AG04449 (cell line): ENCODE measurements at regions of chr11 and their contacts with region 1.

Region 1: DNA sequence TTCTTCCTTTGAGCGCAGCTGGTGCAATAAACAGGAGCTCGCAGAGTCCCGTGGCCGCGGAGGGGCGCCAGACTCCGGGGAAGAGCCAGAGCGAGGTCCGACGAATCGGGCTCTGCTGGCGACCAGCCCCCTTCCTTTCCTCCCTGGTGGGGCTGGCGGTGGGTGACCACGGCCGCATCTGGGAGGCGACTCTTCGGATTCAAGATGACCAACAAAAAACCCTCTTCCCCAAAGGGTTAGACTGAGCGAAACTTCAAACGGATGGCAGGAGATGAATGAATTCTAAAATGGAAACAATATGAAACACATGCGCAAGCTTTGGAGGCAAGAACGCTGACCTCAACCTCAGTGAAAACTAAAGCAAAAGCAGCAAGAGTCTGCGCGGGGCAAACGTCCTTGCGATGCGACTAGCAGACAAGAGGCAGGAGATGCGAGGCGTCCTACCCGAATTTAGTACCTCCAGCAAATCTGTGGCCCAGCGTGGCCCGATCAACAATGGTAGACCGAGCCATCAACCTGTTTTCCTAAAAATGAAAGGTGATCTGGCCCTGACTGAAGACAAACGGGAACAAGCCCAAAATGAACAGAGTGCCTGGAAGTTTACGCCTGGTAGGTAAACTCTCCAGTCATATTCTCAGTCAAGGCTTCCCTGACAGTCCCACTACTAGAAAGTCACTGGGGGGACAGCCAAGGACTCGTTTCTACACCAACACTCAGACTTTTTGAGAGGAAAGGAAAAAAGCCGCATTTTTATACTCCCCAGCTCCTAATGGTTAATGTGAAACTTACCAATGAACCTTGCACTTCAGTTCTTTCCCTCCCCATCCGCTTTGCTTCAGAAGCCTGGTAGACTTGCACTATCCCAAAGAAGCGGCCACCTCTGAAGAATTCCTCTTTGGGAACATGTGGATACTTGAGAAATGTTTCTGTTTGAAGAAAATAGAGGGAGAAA is 11.6 kb downstream of the MMP3 start:
- DNase-seq: no peak
- H3K4me3 ChIP-seq: peak overlapping the region; percentile 52
- CTCF ChIP-seq: peak; percentile 83

Region 2: DNA sequence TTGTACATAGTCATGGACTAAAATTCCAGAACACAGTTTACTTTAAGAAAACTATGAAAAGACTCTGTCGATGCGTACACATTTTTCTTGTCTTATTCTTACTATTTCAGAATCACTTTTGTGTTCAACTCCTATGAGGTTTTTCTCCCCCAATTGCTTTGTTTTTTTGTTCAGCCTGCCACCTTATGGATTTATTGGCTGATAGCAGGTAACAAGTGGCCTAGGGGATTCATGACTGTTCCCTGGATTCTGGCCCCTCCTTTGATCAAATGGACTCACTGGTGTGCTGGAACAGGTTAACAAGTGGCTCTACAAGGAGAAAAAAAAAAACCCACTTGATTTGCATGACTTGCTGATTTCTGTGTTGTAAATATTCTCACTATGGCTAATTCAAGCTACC is 217.3 kb before region 1 on chr11:
- CTCF ChIA-PET with region 1: no interaction called
- POLR2A ChIA-PET with region 1: no interaction called
- DNase-seq: no peak
- H3K4me3 ChIP-seq: no peak overlapping the region
- CTCF ChIP-seq: no peak

Region 3: GRCh38 chr11:102810945-102811660 is 20.7 kb before region 1 on chr11:
- CTCF ChIA-PET with region 1: interaction called, 20 read pairs
- POLR2A ChIA-PET with region 1: no interaction called
- DNase-seq: no peak
- H3K4me3 ChIP-seq: no peak overlapping the region
- CTCF ChIP-seq: peak; percentile 35

Region 4: GRCh38 chr11:102819491-102819890 is 12.3 kb before region 1 on chr11:
- CTCF ChIA-PET with region 1: interaction called, 14 read pairs
- POLR2A ChIA-PET with region 1: no interaction called
- DNase-seq: no peak
- H3K4me3 ChIP-seq: no peak overlapping the region
- CTCF ChIP-seq: no peak

Region 5: DNA sequence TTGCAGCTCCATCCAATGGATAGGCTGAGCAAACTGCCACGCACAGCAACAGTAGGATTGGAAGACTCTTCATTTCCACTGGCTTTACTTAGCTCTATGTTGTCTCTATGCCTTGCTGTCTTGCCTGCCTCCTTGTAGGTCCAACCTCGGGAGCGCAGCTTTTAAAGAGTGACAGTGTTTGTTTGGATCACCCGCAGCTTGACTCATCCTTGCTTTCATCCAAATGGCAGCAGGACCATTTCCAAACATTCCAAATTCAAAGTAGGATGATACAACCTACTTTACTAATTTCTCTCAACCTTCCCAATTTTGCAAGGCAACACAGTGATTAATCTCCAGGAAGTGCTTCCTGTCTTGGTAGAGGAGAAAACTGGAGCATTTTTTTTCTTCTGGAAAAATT is 11.7 kb after region 1 on chr11 and contains the start of gene MMP3:
- CTCF ChIA-PET with region 1: interaction called, 18 read pairs
- POLR2A ChIA-PET with region 1: no interaction called
- DNase-seq: no peak
- H3K4me3 ChIP-seq: no peak within 1 kb of the TSS
- CTCF ChIP-seq: no peak

Region 6: GRCh38 chr11:103024086-103024485 is 192.3 kb after region 1 on chr11:
- CTCF ChIA-PET with region 1: no interaction called
- POLR2A ChIA-PET with region 1: no interaction called
- DNase-seq: no peak
- H3K4me3 ChIP-seq: no peak overlapping the region
- CTCF ChIP-seq: no peak

Region 7: GRCh38 chr11:103085758-103086365 is 254.1 kb after region 1 on chr11:
- CTCF ChIA-PET with region 1: no interaction called
- POLR2A ChIA-PET with region 1: no interaction called
- DNase-seq: peak; percentile 10
- H3K4me3 ChIP-seq: no peak overlapping the region
- CTCF ChIP-seq: no peak